AG04449 (cell line): ENCODE measurements at regions of chr19 and their contacts with region 1.

Region 1: GRCh38 chr19:18521885-18522624 is at the start of gene ELL:
- DNase-seq: peak; percentile 99
- H3K4me3 ChIP-seq: peak within 1 kb of the TSS; percentile 97
- CTCF ChIP-seq: peak; percentile 31

Region 2: GRCh38 chr19:18450931-18451845 is 70.9 kb before region 1 on chr19:
- CTCF ChIA-PET with region 1: interaction called, 13 read pairs
- POLR2A ChIA-PET with region 1: no interaction called
- DNase-seq: no peak
- H3K4me3 ChIP-seq: no peak overlapping the region
- CTCF ChIP-seq: peak; percentile 99

Region 3: DNA sequence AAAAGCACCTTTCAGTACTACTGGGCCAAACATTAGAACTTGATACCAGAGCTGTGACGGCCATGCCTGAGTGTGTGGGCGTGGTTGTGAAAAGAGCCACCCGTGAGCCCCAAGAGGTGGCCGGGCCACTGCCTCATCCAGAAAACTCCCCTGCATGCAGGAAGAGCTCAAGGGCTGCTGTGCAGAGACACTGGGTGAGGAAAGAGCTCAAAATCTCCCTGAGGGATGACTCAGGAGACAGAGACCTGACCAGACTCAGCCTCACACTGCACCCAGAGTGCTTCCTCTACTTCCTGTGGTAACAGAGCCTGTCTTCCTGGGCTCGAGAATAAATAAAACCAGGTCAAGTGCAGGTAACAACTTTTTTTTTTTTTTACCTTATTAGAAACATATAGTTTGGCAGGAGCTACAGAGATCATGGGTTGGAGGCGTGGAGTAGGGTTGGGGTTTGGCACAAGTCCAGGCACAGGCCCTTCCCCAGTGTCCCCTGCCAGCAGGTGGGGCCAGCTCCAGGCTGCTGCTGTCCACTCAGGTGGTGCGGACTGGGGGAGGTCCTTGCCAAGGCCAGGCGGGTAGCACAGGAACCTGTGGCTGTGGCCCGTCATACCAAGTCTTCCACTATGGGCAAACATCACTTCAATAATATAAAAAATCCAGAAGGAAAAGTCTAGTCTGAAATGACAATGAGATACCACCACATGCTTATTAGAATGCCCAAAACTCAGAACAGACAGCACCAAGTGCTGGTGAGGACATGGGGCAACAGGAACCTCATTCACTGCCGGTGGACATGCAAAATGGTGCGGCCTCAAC is 25.7 kb before region 1 on chr19:
- CTCF ChIA-PET with region 1: interaction called, 12 read pairs
- POLR2A ChIA-PET with region 1: interaction called, 3 read pairs
- DNase-seq: no peak
- H3K4me3 ChIP-seq: no peak overlapping the region
- CTCF ChIP-seq: no peak

Region 4: DNA sequence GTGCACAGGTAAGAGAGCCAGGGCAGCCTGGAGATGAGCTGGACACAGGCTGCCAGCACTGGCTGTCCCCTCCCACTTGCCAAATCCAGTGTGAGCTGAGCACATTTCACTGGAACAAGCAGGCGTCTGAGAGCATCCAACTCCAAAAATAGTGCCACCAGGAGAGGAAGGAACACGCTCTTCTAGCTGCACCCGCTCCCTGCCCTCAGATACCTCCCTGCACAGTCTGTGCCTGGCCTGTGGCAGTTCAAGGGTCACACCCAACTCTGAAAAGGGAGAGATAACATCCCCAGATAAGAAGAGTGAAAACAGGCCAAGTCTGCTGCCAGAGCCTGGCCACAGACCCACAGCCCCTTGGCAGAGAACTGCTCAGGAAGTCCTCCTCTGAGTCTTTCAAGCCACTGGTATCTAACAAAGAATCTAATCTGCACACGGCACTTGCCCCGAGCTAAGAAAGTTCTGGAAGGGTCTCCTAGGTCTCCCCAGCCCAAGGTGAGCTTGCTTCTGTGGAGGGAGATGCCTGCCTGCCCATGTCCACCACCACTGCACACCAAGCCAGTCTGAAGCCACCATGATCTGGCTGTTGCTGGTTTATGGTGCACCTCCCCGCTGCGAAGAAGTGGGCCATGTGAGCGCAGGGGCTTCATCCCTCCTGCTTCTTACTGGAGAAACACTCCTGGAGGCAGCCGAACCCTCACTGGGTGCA is 14.9 kb before region 1 on chr19:
- CTCF ChIA-PET with region 1: interaction called, 10 read pairs
- POLR2A ChIA-PET with region 1: interaction called, 3 read pairs
- DNase-seq: no peak
- H3K4me3 ChIP-seq: no peak overlapping the region
- CTCF ChIP-seq: no peak

Region 5: GRCh38 chr19:18659281-18660051 is 137.4 kb after region 1 on chr19:
- CTCF ChIA-PET with region 1: no interaction called
- POLR2A ChIA-PET with region 1: no interaction called
- DNase-seq: no peak
- H3K4me3 ChIP-seq: no peak overlapping the region
- CTCF ChIP-seq: no peak